SK-N-SH (cell line): ENCODE measurements at regions of chr15 and their contacts with region 1.

Region 1: DNA sequence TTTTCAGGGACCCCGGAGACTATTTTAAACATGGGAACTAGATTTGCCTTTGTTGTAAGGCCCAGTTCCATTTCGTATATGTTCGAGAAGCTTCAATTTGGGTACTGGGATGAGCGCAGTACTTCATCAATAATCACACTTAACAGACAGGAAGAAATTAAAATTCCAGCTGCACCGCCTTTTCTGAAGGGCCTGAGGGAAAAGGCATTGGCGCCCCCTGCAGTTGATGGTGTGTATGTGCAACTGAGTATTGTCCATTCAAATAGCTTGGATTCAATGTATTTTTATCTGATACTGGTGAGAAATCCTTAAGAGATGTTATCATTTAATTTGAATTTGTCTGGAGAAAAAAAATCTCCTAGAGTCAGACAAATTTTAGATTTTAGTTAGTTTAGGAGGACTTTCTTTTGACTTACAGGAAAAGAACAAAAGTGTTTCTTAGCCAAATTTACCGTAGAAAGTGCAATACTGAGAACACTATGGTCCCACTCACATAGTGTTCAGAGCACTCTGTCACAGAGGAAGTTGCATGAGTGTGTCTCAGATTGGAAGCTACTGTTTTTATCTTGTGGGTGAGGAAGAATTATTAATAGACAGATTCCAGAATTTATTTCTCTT is 5.4 kb upstream of the ALDH1A2 start:
- DNase-seq: peak; percentile 38
- H3K4me3 ChIP-seq: peak overlapping the region in 1 of 2 experiments; percentile 46; a peak in 1 of 4 replicates
- H3K27ac ChIP-seq: no peak overlapping the region
- H3K4me1 ChIP-seq: no peaks in the 10 kb centered on the region; a peak in 1 of 4 replicates
- H3K27me3 ChIP-seq: peaks cover 15% of the 10 kb centered on the region
- CTCF ChIP-seq: peak; percentile 99
- EP300 ChIP-seq: no peak
- RAD21 ChIP-seq: peak; percentile 86

Region 2: DNA sequence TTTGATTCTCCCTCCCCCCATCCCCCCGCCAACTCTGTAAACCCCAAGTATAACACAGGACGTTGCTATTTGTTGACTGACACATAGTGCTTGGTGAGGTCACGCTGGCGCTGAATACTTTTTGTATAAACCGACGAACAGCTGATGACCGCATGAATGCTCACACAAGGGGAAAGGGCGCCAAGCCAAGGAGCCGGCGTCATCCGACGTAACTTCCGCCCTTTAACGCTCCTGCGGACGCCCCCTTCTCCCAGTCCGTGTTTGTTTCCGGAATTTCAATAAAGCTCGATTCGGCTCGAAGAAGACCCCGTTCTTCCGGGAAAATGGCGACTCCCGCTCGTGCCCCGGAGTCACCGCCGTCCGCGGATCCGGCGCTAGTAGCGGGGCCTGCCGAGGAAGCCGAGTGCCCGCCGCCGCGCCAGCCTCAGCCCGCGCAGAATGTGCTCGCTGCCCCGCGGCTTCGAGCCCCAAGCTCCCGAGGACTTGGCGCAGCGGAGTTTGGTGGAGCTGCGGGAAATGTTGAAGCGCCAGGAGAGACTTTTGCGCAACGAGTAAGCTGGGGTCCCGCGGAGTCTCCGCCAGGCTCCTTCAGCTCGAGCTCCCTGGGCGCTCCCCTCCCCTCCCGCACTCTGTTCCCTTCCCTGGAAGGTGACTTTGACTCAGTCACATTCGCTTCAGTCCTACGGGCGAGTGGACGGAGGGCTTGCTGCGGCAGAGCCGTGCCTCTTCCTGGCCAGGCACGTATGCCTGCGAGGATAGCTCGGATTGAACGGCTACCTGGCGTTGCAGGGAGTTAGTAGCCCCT is 364.3 kb before region 1 on chr15 and contains the start of gene POLR2M:
- CTCF ChIA-PET with region 1: interaction called, 17 read pairs
- POLR2A ChIA-PET with region 1: no interaction called
- DNase-seq: peak; percentile 88
- H3K4me3 ChIP-seq: peak within 1 kb of the TSS; percentile 80 to 99
- H3K27ac ChIP-seq: peak within 1 kb of the TSS; percentile 82 to 85
- H3K4me1 ChIP-seq: peaks cover 0 to 12% of the 10 kb centered on the region in 2 experiments; a peak in 3 of 4 replicates
- H3K27me3 ChIP-seq: no peaks in the 10 kb centered on the region
- CTCF ChIP-seq: no peak
- EP300 ChIP-seq: peak; percentile 18 to 62; a peak in 2 of 4 replicates
- RAD21 ChIP-seq: no peak
- polyA plus RNA-seq, gene POLR2M: 105 and 160 TPM in 2 replicates

Region 3: DNA sequence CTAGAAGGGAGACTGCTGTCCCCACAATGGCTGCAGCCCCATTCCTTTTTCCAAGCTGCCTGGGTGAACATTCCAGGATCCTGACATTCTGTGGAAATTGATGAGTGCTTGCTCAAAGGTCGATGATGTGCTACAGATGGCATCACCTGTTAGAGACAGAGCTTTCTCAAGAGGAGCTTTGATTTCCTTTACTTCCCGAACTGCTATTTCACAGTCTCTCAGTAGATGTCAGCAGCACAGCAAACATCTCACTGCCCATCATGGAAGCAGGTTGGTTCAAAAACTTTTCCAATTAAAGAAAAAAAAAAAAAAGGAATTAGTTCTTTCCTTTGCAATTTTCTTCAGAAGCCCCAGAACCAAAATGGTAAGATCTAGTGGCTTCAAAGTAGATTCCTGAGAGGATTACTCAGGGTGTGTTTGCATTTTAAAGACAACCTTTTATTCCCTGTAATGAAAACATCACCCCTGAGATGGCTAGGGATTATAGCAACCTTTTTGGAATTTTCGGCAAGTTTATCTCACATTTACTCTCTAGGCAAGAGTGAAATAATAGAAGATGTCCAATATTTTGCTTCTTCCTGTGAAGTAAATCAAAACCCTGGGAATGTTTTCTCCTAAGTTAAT is 319.6 kb before region 1 on chr15:
- CTCF ChIA-PET with region 1: interaction called, 241 read pairs
- POLR2A ChIA-PET with region 1: no interaction called
- DNase-seq: peak; percentile 48
- H3K4me3 ChIP-seq: no peak overlapping the region
- H3K27ac ChIP-seq: no peak overlapping the region
- H3K4me1 ChIP-seq: no peaks in the 10 kb centered on the region; a peak in 1 of 4 replicates
- H3K27me3 ChIP-seq: no peaks in the 10 kb centered on the region
- CTCF ChIP-seq: peak; percentile 62
- EP300 ChIP-seq: no peak
- RAD21 ChIP-seq: peak; percentile 85

Region 4: GRCh38 chr15:57873564-57874209 is 197.2 kb before region 1 on chr15:
- CTCF ChIA-PET with region 1: interaction called, 216 read pairs
- POLR2A ChIA-PET with region 1: no interaction called
- DNase-seq: no peak
- H3K4me3 ChIP-seq: no peak overlapping the region
- H3K27ac ChIP-seq: peak overlapping the region in 1 of 2 experiments; percentile 55; a peak in 2 of 4 replicates
- H3K4me1 ChIP-seq: peaks cover 0 to 7% of the 10 kb centered on the region in 2 experiments; a peak in 2 of 4 replicates
- H3K27me3 ChIP-seq: no peaks in the 10 kb centered on the region
- CTCF ChIP-seq: no peak
- EP300 ChIP-seq: 0 out of 4 replicates have a peak, but pooled peaks of 1 of the 2 experiments have one; percentile 31
- RAD21 ChIP-seq: no peak

Region 5: GRCh38 chr15:58043192-58043903 is 27.6 kb before region 1 on chr15:
- CTCF ChIA-PET with region 1: interaction called, 17 read pairs
- POLR2A ChIA-PET with region 1: no interaction called
- DNase-seq: no peak
- H3K4me3 ChIP-seq: no peak overlapping the region
- H3K27ac ChIP-seq: no peak overlapping the region
- H3K4me1 ChIP-seq: no peaks in the 10 kb centered on the region
- H3K27me3 ChIP-seq: no peaks in the 10 kb centered on the region; the same call in 1 of the 2 replicates
- CTCF ChIP-seq: peak; percentile 83
- EP300 ChIP-seq: no peak
- RAD21 ChIP-seq: peak; percentile 52

Region 6: DNA sequence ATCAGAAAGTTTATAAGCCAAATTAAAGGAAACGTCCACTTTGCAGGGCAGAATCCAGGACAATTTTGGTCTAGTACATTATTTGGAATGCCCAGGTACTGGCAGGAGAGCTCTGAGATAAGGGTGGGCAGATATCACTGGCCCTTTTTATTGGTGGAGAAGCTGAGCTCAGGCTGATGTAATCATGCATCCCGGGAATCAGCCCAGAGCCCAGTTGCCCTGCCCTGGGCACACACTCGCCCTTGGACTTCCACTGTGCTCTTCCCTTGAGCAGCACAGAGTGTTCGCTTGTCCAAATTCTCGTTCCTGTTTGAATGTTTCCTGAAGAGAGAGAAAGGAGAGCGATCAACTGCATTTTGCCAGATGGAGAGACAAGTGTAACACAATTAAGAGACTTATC is 71.0 kb after region 1 on chr15:
- CTCF ChIA-PET with region 1: interaction called, 10 read pairs
- POLR2A ChIA-PET with region 1: no interaction called
- DNase-seq: no peak
- H3K4me3 ChIP-seq: no peak overlapping the region
- H3K27ac ChIP-seq: no peak overlapping the region
- H3K4me1 ChIP-seq: no peaks in the 10 kb centered on the region
- H3K27me3 ChIP-seq: no peaks in the 10 kb centered on the region
- CTCF ChIP-seq: no peak
- EP300 ChIP-seq: no peak
- RAD21 ChIP-seq: no peak

Region 7: DNA sequence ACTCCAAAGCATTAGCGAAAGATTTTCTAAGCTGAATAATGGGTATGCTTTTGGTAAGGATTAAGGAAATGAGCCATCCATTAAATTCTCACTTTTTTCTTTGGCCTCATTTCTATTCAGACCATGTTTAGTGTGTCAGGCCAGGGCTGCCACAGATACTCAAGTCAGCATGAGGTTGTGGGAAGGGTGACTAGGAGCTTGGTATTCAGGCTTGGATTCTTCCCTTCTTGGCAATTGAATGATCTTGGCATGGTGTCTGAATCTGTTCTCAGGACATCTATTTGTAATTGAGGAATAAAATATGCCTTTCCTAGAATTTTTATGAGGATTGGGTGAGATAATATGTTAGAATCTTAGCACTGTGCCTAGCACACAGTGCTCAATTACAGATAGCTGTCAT is 1045.2 kb after region 1 on chr15:
- CTCF ChIA-PET with region 1: no interaction called
- POLR2A ChIA-PET with region 1: no interaction called
- DNase-seq: no peak
- H3K4me3 ChIP-seq: no peak overlapping the region
- H3K27ac ChIP-seq: no peak overlapping the region
- H3K4me1 ChIP-seq: no peaks in the 10 kb centered on the region
- H3K27me3 ChIP-seq: no peaks in the 10 kb centered on the region
- CTCF ChIP-seq: no peak
- EP300 ChIP-seq: no peak
- RAD21 ChIP-seq: no peak